CD8-positive, alpha-beta memory T cell (primary cell): ENCODE measurements at regions of chr13 and their contacts with region 1.

Region 1: DNA sequence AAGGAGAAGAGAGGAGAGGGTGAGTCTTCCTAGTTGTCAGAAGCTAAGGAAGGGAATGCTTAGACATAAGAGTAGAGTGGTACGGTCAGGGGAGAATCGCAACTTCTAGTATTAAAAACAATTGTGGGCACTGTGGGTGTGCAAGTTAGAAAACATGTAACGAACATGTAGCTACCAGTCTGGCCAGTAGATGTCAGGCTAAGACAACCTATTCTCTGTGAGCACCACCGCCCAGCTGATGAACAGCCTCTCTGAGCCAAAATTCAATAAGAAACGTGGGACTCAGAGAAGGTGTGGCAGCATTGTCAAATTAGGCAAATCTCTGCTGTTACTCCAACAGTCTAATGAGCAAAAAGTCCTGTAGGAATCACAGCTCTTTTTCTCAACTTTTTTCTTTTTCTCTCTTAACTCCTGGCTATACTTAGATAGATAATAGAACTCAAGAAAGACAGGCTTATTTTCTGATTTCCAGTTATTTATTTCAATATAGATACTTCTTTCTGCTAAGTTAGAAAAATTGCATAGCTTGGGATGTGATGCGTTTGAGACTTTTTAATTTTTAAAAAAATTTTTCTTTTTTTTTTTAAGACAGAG is 186.2 kb downstream of the USP12 start:
- DNase-seq: peak; percentile 40 to 75 (median 61)
- H3K4me3 ChIP-seq: no peak overlapping the region
- H3K4me3 Mint-ChIP-seq: no peak overlapping the region
- H3K27ac ChIP-seq: no peak overlapping the region
- H3K27ac Mint-ChIP-seq: no peak overlapping the region
- H3K4me1 ChIP-seq: no peaks in the 10 kb centered on the region
- H3K4me1 Mint-ChIP-seq: peaks cover 2 to 3% (median 3%) of the 10 kb centered on the region in 3 donors
- H3K27me3 ChIP-seq: no peaks in the 10 kb centered on the region
- H3K27me3 Mint-ChIP-seq: peaks cover 18 to 21% of the 10 kb centered on the region in 2 donors

Region 2: DNA sequence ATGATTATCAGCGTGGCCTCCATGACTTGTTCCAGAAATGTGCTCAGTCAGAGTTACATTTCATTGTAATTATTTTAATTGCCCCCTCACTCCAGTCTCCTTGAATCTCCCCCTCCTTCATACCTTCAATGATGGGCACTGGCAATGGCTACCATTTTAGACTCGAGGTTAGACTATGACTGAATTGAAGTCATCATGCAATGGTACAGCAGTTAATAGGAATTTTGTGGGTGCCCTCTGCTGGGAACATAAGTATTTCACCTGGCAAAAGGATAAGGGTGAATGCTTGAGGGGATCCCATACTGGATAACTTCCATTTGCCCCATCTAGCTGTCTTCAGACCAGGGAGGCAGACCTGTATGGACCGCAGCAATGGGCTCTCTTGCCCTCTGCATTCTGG is 218.5 kb after region 1 on chr13:
- CTCF ChIA-PET with region 1: interaction called, 11 read pairs
- POLR2A ChIA-PET with region 1: no interaction called
- DNase-seq: no peak
- H3K4me3 ChIP-seq: no peak overlapping the region
- H3K4me3 Mint-ChIP-seq: no peak overlapping the region
- H3K27ac ChIP-seq: no peak overlapping the region
- H3K27ac Mint-ChIP-seq: no peak overlapping the region
- H3K4me1 ChIP-seq: no peaks in the 10 kb centered on the region
- H3K4me1 Mint-ChIP-seq: no peaks in the 10 kb centered on the region
- H3K27me3 ChIP-seq: no peaks in the 10 kb centered on the region
- H3K27me3 Mint-ChIP-seq: peaks cover 0 to 4% of the 10 kb centered on the region in 2 donors

Region 3: DNA sequence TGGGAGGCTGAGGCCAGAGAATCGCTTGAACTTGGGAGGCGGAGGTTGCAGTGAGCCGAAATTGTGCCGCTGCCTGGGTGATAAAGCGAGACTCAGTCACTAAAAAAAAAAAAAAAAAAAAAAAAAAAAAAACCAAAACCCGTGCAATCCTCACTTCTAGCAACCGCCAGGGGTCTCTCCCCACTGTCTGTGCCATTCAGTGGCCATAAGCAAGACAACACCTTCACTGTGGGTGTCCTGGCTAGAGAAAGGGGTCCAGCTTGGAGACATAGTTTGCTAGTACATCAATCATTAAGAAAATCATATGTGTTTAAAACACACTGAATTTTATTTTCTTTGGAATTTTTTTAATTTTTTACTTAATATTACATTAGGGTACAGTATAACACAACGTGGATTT is 353.4 kb after region 1 on chr13:
- CTCF ChIA-PET with region 1: interaction called, 11 read pairs
- POLR2A ChIA-PET with region 1: no interaction called
- DNase-seq: no peak
- H3K4me3 ChIP-seq: no peak overlapping the region
- H3K4me3 Mint-ChIP-seq: no peak overlapping the region
- H3K27ac ChIP-seq: no peak overlapping the region
- H3K27ac Mint-ChIP-seq: no peak overlapping the region
- H3K4me1 ChIP-seq: no peaks in the 10 kb centered on the region
- H3K4me1 Mint-ChIP-seq: no peaks in the 10 kb centered on the region
- H3K27me3 ChIP-seq: no peaks in the 10 kb centered on the region
- H3K27me3 Mint-ChIP-seq: peaks cover 15 to 29% of the 10 kb centered on the region in 2 donors

Region 4: GRCh38 chr13:27980280-27980998 is 995.1 kb after region 1 on chr13:
- CTCF ChIA-PET with region 1: interaction called, 10 read pairs
- POLR2A ChIA-PET with region 1: no interaction called
- DNase-seq: no peak
- H3K4me3 ChIP-seq: no peak overlapping the region
- H3K4me3 Mint-ChIP-seq: peak overlapping the region in 5 of 7 donors; percentile 50 to 88 (median 63)
- H3K27ac ChIP-seq: no peak overlapping the region
- H3K27ac Mint-ChIP-seq: peak overlapping the region in 1 of 8 donors; percentile 41
- H3K4me1 ChIP-seq: peaks cover 4% of the 10 kb centered on the region
- H3K4me1 Mint-ChIP-seq: peaks cover 11 to 34% (median 21%) of the 10 kb centered on the region in 3 donors
- H3K27me3 ChIP-seq: peaks cover 28% of the 10 kb centered on the region
- H3K27me3 Mint-ChIP-seq: peaks cover 52 to 76% of the 10 kb centered on the region in 2 donors